ENCODE measurements at regions of chr4 and their contacts with region 1.

Region 1: DNA sequence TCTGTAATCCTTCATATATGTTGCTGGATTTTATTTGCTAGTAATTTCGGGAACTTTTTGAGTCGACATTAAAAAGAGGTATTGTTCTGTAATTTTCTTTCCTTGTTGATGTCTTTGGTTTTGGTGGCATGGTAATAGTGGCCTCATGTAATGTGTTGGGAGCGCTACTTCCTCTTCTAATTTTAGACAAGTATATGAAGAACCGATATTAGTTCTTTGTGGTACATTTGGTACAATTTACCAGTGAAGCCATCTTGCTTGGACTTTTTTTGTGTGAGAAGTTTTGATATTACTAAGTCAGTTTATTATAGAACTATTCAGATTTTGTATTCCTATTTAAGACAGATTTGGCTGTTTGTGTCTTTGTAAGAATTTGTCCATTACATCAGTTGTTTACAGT is 669.2 kb upstream of the AADAT start:
- DNase-seq: no peak
- ATAC-seq: no peak
- H3K4me3 Mint-ChIP-seq: no peak overlapping the region
- H3K27ac Mint-ChIP-seq: no peak overlapping the region
- H3K4me1 Mint-ChIP-seq: no peaks in the 10 kb centered on the region
- H3K27me3 Mint-ChIP-seq: no peaks in the 10 kb centered on the region; the same call in 1 of the 2 replicates
- CTCF ChIP-seq: no peak

Region 2: GRCh38 chr4:170198747-170199146 is 560.2 kb before region 1 on chr4:
- CTCF ChIA-PET with region 1: no interaction called
- POLR2A ChIA-PET with region 1: interaction called, 10 read pairs
- DNase-seq: no peak
- ATAC-seq: no peak
- H3K4me3 Mint-ChIP-seq: no peak overlapping the region
- H3K27ac Mint-ChIP-seq: no peak overlapping the region
- H3K4me1 Mint-ChIP-seq: peaks cover 4% of the 10 kb centered on the region
- H3K27me3 Mint-ChIP-seq: no peaks in the 10 kb centered on the region
- CTCF ChIP-seq: no peak

Region 3: DNA sequence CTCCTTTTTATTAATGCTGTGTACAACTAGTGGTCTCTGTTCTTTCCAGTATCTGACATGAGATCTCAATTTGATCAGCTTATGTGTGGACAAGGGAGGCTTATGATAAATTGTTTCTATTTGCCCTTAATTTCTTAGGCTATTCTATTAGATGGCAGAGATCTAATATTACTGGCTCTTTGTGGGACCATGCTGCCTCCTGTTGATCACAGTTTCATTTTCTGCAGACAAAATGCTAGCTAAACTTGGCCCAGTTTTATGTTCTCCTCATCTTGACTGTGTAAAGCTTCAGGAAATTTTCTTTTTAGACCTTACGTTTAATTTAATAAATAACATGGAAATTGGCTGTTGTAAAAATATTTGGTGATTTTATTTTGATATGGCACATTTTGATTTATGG is 42.1 kb before region 1 on chr4:
- CTCF ChIA-PET with region 1: no interaction called
- POLR2A ChIA-PET with region 1: no interaction called
- DNase-seq: no peak
- ATAC-seq: no peak
- H3K4me3 Mint-ChIP-seq: no peak overlapping the region
- H3K27ac Mint-ChIP-seq: no peak overlapping the region
- H3K4me1 Mint-ChIP-seq: 0 out of 2 replicates have a peak, but pooled peaks cover 6% of the 10 kb centered on the region
- H3K27me3 Mint-ChIP-seq: no peaks in the 10 kb centered on the region
- CTCF ChIP-seq: no peak

Measured in WTC11 (cell line).